WTC11 (cell line): ENCODE measurements at regions of chr11 and their contacts with region 1.

Region 1: DNA sequence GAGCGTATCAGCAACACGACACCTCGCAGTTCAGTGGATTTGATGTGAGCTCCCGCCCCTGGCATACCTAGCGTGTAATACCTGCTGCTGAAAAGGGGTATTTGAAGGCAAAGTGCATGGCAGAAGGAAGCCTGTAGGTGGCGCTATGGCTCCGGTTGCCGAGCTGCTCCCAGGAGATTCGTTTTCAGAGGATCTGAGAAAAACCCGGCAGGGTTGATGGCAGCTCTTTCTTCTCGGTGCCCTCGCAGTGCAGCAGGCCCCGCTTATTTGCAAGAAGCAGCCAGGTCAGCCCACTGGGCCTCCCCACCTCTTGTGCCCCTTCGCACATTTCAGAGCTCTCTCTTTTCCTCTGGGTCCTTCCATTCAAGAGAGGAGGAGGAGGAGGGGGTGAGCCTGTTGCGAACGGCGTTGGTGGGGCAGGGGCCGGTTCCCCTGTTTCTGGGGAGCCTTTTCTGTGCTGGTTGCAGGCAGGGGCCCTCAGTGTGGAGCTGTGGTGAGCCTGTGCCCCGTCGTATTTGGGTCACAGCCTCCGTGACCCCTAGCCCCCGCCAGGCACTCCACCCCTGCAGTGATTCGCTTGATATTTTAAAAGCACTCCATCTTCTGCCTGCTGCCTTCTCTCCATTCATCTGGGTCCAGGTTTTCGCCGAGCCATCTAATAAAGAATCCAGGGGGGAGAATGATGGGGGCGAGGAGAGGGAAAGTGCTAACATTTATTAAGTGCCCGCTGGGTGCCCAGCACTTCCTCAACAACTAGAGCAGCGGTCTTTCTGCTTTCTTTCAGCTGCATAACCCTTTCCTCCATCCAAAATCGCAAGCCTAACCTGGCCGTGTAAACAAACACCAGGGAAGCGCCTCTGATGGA is 85.3 kb upstream of the SYT13 start:
- DNase-seq: peak; percentile 93
- ATAC-seq: peak; percentile 91
- H3K4me3 Mint-ChIP-seq: peak overlapping the region; percentile 65
- H3K27ac Mint-ChIP-seq: no peak overlapping the region
- H3K4me1 Mint-ChIP-seq: peaks cover 16% of the 10 kb centered on the region
- H3K27me3 Mint-ChIP-seq: peaks cover 13% of the 10 kb centered on the region
- CTCF ChIP-seq: peak; percentile 93

Region 2: GRCh38 chr11:45110562-45110961 is 260.9 kb before region 1 on chr11:
- CTCF ChIA-PET with region 1: interaction called, 14 read pairs
- POLR2A ChIA-PET with region 1: no interaction called
- DNase-seq: no peak
- ATAC-seq: peak; percentile 78
- H3K4me3 Mint-ChIP-seq: no peak overlapping the region
- H3K27ac Mint-ChIP-seq: no peak overlapping the region
- H3K4me1 Mint-ChIP-seq: no peaks in the 10 kb centered on the region
- H3K27me3 Mint-ChIP-seq: peaks cover 17% of the 10 kb centered on the region
- CTCF ChIP-seq: peak; percentile 66

Region 3: GRCh38 chr11:45383224-45383623 is 11.7 kb after region 1 on chr11:
- CTCF ChIA-PET with region 1: interaction called, 15 read pairs
- POLR2A ChIA-PET with region 1: no interaction called
- DNase-seq: no peak
- ATAC-seq: no peak
- H3K4me3 Mint-ChIP-seq: no peak overlapping the region
- H3K27ac Mint-ChIP-seq: no peak overlapping the region
- H3K4me1 Mint-ChIP-seq: peaks cover 12% of the 10 kb centered on the region
- H3K27me3 Mint-ChIP-seq: peaks cover 7% of the 10 kb centered on the region
- CTCF ChIP-seq: no peak

Region 4: GRCh38 chr11:45461514-45461913 is 90.0 kb after region 1 on chr11:
- CTCF ChIA-PET with region 1: interaction called, 16 read pairs
- POLR2A ChIA-PET with region 1: no interaction called
- DNase-seq: no peak
- ATAC-seq: no peak
- H3K4me3 Mint-ChIP-seq: no peak overlapping the region
- H3K27ac Mint-ChIP-seq: no peak overlapping the region
- H3K4me1 Mint-ChIP-seq: no peaks in the 10 kb centered on the region
- H3K27me3 Mint-ChIP-seq: no peaks in the 10 kb centered on the region; the same call in 1 of the 2 replicates
- CTCF ChIP-seq: no peak

Region 5: DNA sequence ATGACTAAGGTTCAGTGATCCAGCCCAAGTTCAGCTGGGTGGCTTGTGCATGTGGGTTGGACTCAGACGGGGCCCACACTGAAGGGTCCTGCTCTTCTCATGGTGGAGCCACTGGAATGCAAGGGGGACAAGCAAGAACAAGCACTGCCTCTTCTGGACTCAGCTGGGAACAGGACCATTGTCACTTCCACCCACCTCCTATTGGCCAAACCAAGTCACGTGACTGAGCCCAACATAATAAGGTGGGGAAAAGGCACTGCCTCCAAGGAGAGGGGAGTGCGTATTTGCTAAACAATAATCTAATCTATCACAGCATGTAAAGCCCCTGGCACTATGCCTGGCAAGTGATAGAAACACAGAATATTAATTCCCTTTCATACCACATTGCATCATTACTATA is 206.8 kb after region 1 on chr11:
- CTCF ChIA-PET with region 1: interaction called, 12 read pairs
- POLR2A ChIA-PET with region 1: no interaction called
- DNase-seq: no peak
- ATAC-seq: no peak; the same call in 1 of the 2 replicates
- H3K4me3 Mint-ChIP-seq: no peak overlapping the region
- H3K27ac Mint-ChIP-seq: no peak overlapping the region
- H3K4me1 Mint-ChIP-seq: peaks cover 17% of the 10 kb centered on the region
- H3K27me3 Mint-ChIP-seq: peaks cover 5% of the 10 kb centered on the region
- CTCF ChIP-seq: no peak

Region 6: GRCh38 chr11:45655347-45655756 is 283.9 kb after region 1 on chr11:
- CTCF ChIA-PET with region 1: interaction called, 155 read pairs
- POLR2A ChIA-PET with region 1: no interaction called
- DNase-seq: peak; percentile 93
- ATAC-seq: peak; percentile 73
- H3K4me3 Mint-ChIP-seq: no peak overlapping the region; the same call in 1 of the 2 replicates
- H3K27ac Mint-ChIP-seq: no peak overlapping the region; the same call in 1 of the 2 replicates
- H3K4me1 Mint-ChIP-seq: peaks cover 31% of the 10 kb centered on the region
- H3K27me3 Mint-ChIP-seq: no peaks in the 10 kb centered on the region; the same call in 1 of the 2 replicates
- CTCF ChIP-seq: peak; percentile 89

Region 7: GRCh38 chr11:45766469-45766868 is 395.0 kb after region 1 on chr11:
- CTCF ChIA-PET with region 1: interaction called, 157 read pairs
- POLR2A ChIA-PET with region 1: interaction called, 4 read pairs
- DNase-seq: no peak
- ATAC-seq: no peak
- H3K4me3 Mint-ChIP-seq: no peak overlapping the region
- H3K27ac Mint-ChIP-seq: no peak overlapping the region
- H3K4me1 Mint-ChIP-seq: peaks cover 2% of the 10 kb centered on the region; the same call in 1 of the 2 replicates
- H3K27me3 Mint-ChIP-seq: peaks cover 7% of the 10 kb centered on the region
- CTCF ChIP-seq: no peak